Calu3 (cell line): ENCODE measurements at regions of chr7 and their contacts with region 1.

Region 1: DNA sequence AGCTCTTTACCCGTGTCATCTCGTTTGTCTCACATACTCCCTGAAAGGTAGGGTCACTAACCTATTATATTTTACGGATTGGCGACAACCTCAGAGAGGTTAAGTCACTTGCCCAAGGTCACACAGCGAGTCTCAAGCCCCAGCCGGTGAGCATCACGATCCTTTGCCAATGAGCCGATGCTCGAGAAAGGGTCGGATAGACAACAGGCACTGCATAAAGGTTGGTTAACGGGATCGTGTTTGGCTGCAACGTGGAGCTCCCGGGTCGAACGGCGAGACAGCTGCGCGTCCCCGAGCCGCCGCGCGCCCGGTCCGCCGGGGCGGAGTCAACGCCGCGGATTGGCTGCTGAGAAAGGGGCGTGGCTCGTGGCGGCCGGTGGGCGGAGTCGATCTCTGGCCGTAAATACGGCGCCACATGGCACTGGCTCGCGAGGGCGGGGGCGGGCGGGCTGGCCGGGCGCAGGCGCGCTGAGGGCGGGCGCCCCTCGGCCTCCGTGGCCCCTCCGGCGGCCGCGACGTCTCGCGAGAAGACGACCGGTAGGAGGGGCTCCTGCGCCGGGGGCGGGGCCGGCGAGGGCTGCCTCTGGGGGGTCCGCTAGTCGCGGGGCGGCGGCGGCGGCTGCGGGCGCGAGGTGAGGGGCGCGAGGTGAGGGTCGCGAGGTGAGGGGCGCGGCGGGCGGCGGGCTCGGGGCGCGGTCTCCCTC is at the start of gene CHST12:
- DNase-seq: peak; percentile 99
- H3K4me3 Mint-ChIP-seq: peak within 1 kb of the TSS; percentile 79
- H3K27ac Mint-ChIP-seq: peak within 1 kb of the TSS; percentile 34
- H3K4me1 Mint-ChIP-seq: peaks cover 29% of the 10 kb centered on the region
- H3K27me3 Mint-ChIP-seq: no peaks in the 10 kb centered on the region
- CTCF ChIP-seq: no peak
- total RNA-seq, gene CHST12: 19.9 and 21.2 TPM in 2 replicates

Region 2: DNA sequence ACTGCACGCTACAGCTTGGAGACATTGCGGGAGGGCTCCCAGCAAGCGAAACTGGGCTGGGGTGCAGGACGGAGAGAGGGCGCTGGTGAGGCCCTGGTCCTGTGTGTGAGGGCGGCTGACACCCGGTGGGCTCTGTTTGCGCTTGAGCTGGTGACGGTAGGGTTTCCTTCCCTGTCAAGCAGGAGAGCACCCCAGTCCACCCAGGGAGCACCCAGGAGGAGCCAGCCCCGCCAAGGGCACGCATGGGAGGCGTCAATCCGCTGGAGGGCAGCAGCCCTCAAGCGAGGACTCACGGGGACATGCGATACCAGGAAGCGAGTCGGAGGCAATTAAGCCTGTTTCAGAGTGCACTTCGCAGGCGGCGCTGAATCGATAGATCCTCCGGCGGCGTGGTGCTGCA is 279.8 kb before region 1 on chr7:
- CTCF ChIA-PET with region 1: no interaction called
- intact Hi-C with region 1: no loop called
- DNase-seq: no peak
- H3K4me3 Mint-ChIP-seq: no peak overlapping the region
- H3K27ac Mint-ChIP-seq: no peak overlapping the region
- H3K4me1 Mint-ChIP-seq: no peaks in the 10 kb centered on the region
- H3K27me3 Mint-ChIP-seq: no peaks in the 10 kb centered on the region
- CTCF ChIP-seq: no peak

Region 3: DNA sequence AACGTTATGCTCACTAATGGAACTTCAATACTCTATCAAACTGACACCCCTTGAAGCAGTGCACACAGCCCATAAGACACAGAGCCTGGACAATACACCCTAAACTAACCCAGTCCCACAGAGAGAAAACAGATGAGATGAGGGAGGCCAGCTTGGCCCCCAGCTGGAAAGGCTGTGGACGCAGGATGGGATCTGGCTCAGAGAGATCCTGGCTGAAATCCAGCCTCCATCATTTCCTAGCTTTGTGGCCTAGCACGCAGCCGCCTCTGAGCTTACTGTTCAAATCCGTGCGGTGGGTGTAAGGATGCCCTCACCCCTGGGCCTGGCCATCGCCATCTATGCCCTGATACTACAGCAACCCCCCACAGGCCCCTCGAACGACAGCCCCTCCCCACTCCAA is 121.6 kb before region 1 on chr7:
- CTCF ChIA-PET with region 1: interaction called, 15 read pairs
- intact Hi-C with region 1: no loop called
- DNase-seq: no peak
- H3K4me3 Mint-ChIP-seq: no peak overlapping the region
- H3K27ac Mint-ChIP-seq: no peak overlapping the region
- H3K4me1 Mint-ChIP-seq: no peaks in the 10 kb centered on the region
- H3K27me3 Mint-ChIP-seq: no peaks in the 10 kb centered on the region
- CTCF ChIP-seq: no peak

Region 4: GRCh38 chr7:2465928-2466327 is 62.8 kb after region 1 on chr7:
- CTCF ChIA-PET with region 1: interaction called, 11 read pairs
- intact Hi-C with region 1: no loop called
- DNase-seq: no peak
- H3K4me3 Mint-ChIP-seq: no peak overlapping the region
- H3K27ac Mint-ChIP-seq: no peak overlapping the region
- H3K4me1 Mint-ChIP-seq: peaks cover 18% of the 10 kb centered on the region
- H3K27me3 Mint-ChIP-seq: peaks cover 30% of the 10 kb centered on the region
- CTCF ChIP-seq: no peak

Region 5: GRCh38 chr7:3356173-3356572 is 953.0 kb after region 1 on chr7:
- CTCF ChIA-PET with region 1: no interaction called
- intact Hi-C with region 1: no loop called
- DNase-seq: no peak
- H3K4me3 Mint-ChIP-seq: no peak overlapping the region
- H3K27ac Mint-ChIP-seq: no peak overlapping the region
- H3K4me1 Mint-ChIP-seq: no peaks in the 10 kb centered on the region
- H3K27me3 Mint-ChIP-seq: no peaks in the 10 kb centered on the region
- CTCF ChIP-seq: no peak